Endothelial cell of umbilical vein (primary cell): ENCODE measurements at regions of chr19 and their contacts with region 1.

Region 1: GRCh38 chr19:33176670-33177416 is 17.3 kb upstream of the LRP3 start:
- DNase-seq: peak; percentile 100
- H3K4me3 ChIP-seq: peak overlapping the region; percentile 55 to 86 (median 63)
- H3K27ac ChIP-seq: peak overlapping the region; percentile 62
- H3K4me1 ChIP-seq: peaks cover 15% of the 10 kb centered on the region
- H3K27me3 ChIP-seq: peaks cover 0 to 7% of the 10 kb centered on the region in 2 experiments
- CTCF ChIP-seq: peak in 1 of 2 donors; percentile 32
- POLR2A ChIP-seq: peak; percentile 94

Region 2: GRCh38 chr19:33080761-33081681 is 95.8 kb before region 1 on chr19 and contains the start of gene GPATCH1:
- CTCF ChIA-PET with region 1: interaction called, 7 read pairs
- POLR2A ChIA-PET with region 1: no interaction called
- dilution Hi-C with region 1: no loop called
- intact Hi-C with region 1: loop called (anchors 1 kb)
- DNase-seq: peak; percentile 87
- H3K4me3 ChIP-seq: peak within 1 kb of the TSS; percentile 79 to 89 (median 88)
- H3K27ac ChIP-seq: peak within 1 kb of the TSS; percentile 14
- H3K4me1 ChIP-seq: peaks cover 9% of the 10 kb centered on the region
- H3K27me3 ChIP-seq: no peaks in the 10 kb centered on the region
- CTCF ChIP-seq: no peak
- POLR2A ChIP-seq: peak; percentile 68
- total RNA-seq, gene GPATCH1: 8.1 and 9.2 TPM in 2 replicates

Region 3: GRCh38 chr19:33143897-33144405 is 32.9 kb before region 1 on chr19:
- CTCF ChIA-PET with region 1: interaction called, 22 read pairs
- POLR2A ChIA-PET with region 1: no interaction called
- dilution Hi-C with region 1: no loop called
- intact Hi-C with region 1: loop called (anchors 2 kb)
- DNase-seq: peak; percentile 60
- H3K4me3 ChIP-seq: no peak overlapping the region
- H3K27ac ChIP-seq: no peak overlapping the region
- H3K4me1 ChIP-seq: no peaks in the 10 kb centered on the region
- H3K27me3 ChIP-seq: no peaks in the 10 kb centered on the region
- CTCF ChIP-seq: peak; percentile 89 to 95
- POLR2A ChIP-seq: no peak

Region 4: DNA sequence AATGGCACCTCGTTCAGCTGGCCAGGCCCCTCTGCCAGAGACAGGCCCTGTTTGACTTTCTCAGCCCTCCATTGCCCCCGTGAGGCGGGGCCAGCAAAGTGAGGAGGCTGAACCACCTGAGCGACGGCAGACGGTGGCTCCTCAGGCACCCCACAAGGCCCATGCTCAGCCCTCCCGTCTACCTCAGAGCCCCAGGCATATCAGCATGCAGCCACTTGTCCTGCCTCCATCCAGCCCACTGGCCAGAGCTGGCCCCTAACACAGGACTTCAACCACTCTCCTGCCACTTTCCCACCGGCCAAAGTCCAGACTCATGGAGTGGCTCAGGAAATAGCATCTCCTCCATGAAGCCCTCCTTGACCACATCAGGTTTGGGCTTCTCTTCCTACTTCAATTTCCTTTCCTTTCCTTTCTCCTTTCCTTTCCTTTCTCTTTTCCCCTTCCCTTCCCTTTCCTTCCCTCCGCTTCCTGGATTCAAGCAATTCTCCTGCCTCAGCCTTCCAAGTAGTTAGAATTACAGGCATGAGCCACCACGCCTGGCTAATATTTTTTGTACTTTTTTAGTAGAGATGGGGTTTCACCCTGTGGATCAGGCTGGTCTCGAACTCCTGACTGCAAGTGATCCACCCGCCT is 39.5 kb after region 1 on chr19:
- CTCF ChIA-PET with region 1: no interaction called
- POLR2A ChIA-PET with region 1: no interaction called
- dilution Hi-C with region 1: no loop called
- intact Hi-C with region 1: no loop called
- DNase-seq: no peak
- H3K4me3 ChIP-seq: no peak overlapping the region
- H3K27ac ChIP-seq: no peak overlapping the region
- H3K4me1 ChIP-seq: no peaks in the 10 kb centered on the region
- H3K27me3 ChIP-seq: no peaks in the 10 kb centered on the region
- CTCF ChIP-seq: no peak
- POLR2A ChIP-seq: no peak

Region 5: GRCh38 chr19:33226550-33227241 is 49.9 kb after region 1 on chr19:
- CTCF ChIA-PET with region 1: no interaction called
- POLR2A ChIA-PET with region 1: no interaction called
- dilution Hi-C with region 1: no loop called
- intact Hi-C with region 1: loop called (anchors 1 kb)
- DNase-seq: no peak
- H3K4me3 ChIP-seq: no peak overlapping the region
- H3K27ac ChIP-seq: no peak overlapping the region
- H3K4me1 ChIP-seq: no peaks in the 10 kb centered on the region
- H3K27me3 ChIP-seq: peaks cover 29 to 39% of the 10 kb centered on the region in 2 experiments
- CTCF ChIP-seq: no peak
- POLR2A ChIP-seq: no peak